ENCODE measurements at regions of chr10 and their contacts with region 1.

Region 1: GRCh38 chr10:13371897-13372470 is 23.9 kb upstream of the SEPHS1 start:
- DNase-seq: peak in 1 of 2 donors; percentile 72
- ATAC-seq: peak; percentile 87
- H3K4me3 ChIP-seq: no peak overlapping the region
- H3K27ac ChIP-seq: no peak overlapping the region
- H3K4me1 ChIP-seq: no peaks in the 10 kb centered on the region
- H3K27me3 ChIP-seq: no peaks in the 10 kb centered on the region

Region 2: DNA sequence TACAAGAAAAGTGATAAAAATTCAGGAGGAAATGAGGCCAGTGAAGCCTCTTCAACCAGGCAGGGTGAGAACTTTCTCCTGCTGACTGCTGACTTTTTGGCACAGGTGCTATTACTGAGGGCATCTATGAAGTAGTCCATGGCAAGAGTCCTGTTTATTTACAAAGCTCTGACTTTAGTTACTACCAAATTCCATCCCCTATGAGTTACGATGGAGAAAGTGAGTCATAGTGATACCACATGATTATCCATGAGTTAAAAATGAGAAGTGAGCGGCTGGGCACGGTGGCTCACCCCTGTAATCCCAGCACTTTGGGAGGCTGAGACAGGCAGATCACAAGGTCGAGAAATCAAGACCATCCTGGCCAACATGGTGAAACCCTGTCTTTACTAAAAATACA is 390.4 kb before region 1 on chr10:
- intact Hi-C with region 1: no loop called
- DNase-seq: no peak
- ATAC-seq: no peak
- H3K4me3 ChIP-seq: no peak overlapping the region
- H3K27ac ChIP-seq: no peak overlapping the region
- H3K4me1 ChIP-seq: peaks cover 3 to 5% of the 10 kb centered on the region in 2 donors
- H3K27me3 ChIP-seq: no peaks in the 10 kb centered on the region

Region 3: GRCh38 chr10:13440185-13441061 is 68.4 kb after region 1 on chr10:
- intact Hi-C with region 1: loop called in 1 of 2 experiments (anchors 5 kb)
- DNase-seq: peak; percentile 61 to 87
- ATAC-seq: peak; percentile 83
- H3K4me3 ChIP-seq: peak overlapping the region in 1 of 2 donors; percentile 16
- H3K27ac ChIP-seq: no peak overlapping the region
- H3K4me1 ChIP-seq: no peaks in the 10 kb centered on the region
- H3K27me3 ChIP-seq: no peaks in the 10 kb centered on the region

Region 4: GRCh38 chr10:13536674-13537366 is 164.8 kb after region 1 on chr10:
- intact Hi-C with region 1: loop called in 1 of 2 experiments (anchors 2 kb)
- DNase-seq: no peak
- ATAC-seq: no peak
- H3K4me3 ChIP-seq: no peak overlapping the region
- H3K27ac ChIP-seq: no peak overlapping the region
- H3K4me1 ChIP-seq: no peaks in the 10 kb centered on the region
- H3K27me3 ChIP-seq: no peaks in the 10 kb centered on the region